ENCODE measurements at regions of chr2 and their contacts with region 1.

Region 1: GRCh38 chr2:204005940-204006721 is 69.6 kb downstream of the ICOS start:
- DNase-seq: peak; percentile 16
- H3K4me3 Mint-ChIP-seq: no peak overlapping the region
- H3K27ac Mint-ChIP-seq: peak overlapping the region; percentile 90
- H3K4me1 Mint-ChIP-seq: peaks cover 83% of the 10 kb centered on the region
- H3K27me3 Mint-ChIP-seq: no peaks in the 10 kb centered on the region

Region 2: DNA sequence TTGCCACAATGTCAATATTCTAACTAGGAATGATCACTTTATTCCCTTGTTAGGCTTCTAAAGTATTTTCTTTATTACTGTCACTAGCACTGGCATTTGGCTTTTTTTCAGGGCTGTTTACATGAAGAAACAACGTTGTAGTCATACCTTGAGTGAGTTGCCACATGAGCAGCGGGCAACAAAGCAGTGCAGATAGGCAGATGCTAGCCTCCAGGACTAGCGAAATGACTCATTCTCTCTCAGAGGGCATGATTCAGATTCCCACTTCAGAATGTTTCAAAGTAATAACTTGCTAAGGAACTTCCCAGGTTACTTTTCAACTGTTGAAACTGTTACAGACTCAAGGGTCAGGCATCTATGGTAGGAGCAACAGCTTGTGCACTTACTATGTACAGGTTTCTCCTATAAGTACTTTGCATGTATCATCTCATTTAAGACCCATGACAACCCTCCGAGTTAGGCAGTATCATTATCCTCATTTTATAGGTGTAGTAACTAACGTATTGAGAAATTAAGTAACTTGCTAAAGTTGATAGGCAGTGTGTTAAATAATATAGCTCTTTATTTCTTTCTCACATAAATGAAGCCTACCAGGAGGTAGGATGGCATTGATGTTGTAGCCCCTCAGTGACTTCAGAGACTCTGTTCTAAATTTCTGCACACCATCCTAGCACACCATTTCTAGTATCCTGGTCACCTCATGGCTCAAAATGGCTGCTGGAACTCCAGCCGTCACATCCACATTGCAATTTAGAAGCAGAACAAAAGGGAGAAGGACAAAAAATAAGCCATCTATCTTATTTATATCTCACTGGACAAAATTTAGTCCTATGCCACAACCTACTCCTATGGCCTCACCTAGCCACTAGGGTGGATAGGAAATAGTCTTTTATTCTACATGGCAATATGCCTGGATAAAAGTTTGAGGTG is 13.7 kb after region 1 on chr2:
- CTCF ChIA-PET with region 1: interaction called, 13 read pairs
- POLR2A ChIA-PET with region 1: no interaction called
- DNase-seq: peak; percentile 52
- H3K4me3 Mint-ChIP-seq: no peak overlapping the region
- H3K27ac Mint-ChIP-seq: peak overlapping the region; percentile 28
- H3K4me1 Mint-ChIP-seq: peaks cover 63% of the 10 kb centered on the region
- H3K27me3 Mint-ChIP-seq: no peaks in the 10 kb centered on the region